ENCODE measurements at regions of chr1 and their contacts with region 1.

Region 1: GRCh38 chr1:31789259-31790065 is 25.3 kb upstream of the ADGRB2 start:
- DNase-seq: peak; percentile 97
- ATAC-seq: peak; percentile 82
- H3K4me3 Mint-ChIP-seq: peak overlapping the region; percentile 77
- H3K27ac Mint-ChIP-seq: no peak overlapping the region
- H3K4me1 Mint-ChIP-seq: peaks cover 12% of the 10 kb centered on the region
- H3K27me3 Mint-ChIP-seq: no peaks in the 10 kb centered on the region

Region 2: GRCh38 chr1:31637915-31638673 is 151.4 kb before region 1 on chr1:
- CTCF ChIA-PET with region 1: interaction called, 20 read pairs
- POLR2A ChIA-PET with region 1: interaction called, 3 read pairs
- DNase-seq: no peak
- ATAC-seq: no peak
- H3K4me3 Mint-ChIP-seq: no peak overlapping the region
- H3K27ac Mint-ChIP-seq: no peak overlapping the region
- H3K4me1 Mint-ChIP-seq: peaks cover 21% of the 10 kb centered on the region
- H3K27me3 Mint-ChIP-seq: no peaks in the 10 kb centered on the region

Region 3: GRCh38 chr1:31669786-31670592 is 119.5 kb before region 1 on chr1:
- CTCF ChIA-PET with region 1: interaction called, 51 read pairs
- POLR2A ChIA-PET with region 1: no interaction called
- DNase-seq: peak; percentile 36
- ATAC-seq: peak; percentile 66
- H3K4me3 Mint-ChIP-seq: peak overlapping the region; percentile 7
- H3K27ac Mint-ChIP-seq: no peak overlapping the region
- H3K4me1 Mint-ChIP-seq: peaks cover 6% of the 10 kb centered on the region
- H3K27me3 Mint-ChIP-seq: peaks cover 19% of the 10 kb centered on the region

Region 4: DNA sequence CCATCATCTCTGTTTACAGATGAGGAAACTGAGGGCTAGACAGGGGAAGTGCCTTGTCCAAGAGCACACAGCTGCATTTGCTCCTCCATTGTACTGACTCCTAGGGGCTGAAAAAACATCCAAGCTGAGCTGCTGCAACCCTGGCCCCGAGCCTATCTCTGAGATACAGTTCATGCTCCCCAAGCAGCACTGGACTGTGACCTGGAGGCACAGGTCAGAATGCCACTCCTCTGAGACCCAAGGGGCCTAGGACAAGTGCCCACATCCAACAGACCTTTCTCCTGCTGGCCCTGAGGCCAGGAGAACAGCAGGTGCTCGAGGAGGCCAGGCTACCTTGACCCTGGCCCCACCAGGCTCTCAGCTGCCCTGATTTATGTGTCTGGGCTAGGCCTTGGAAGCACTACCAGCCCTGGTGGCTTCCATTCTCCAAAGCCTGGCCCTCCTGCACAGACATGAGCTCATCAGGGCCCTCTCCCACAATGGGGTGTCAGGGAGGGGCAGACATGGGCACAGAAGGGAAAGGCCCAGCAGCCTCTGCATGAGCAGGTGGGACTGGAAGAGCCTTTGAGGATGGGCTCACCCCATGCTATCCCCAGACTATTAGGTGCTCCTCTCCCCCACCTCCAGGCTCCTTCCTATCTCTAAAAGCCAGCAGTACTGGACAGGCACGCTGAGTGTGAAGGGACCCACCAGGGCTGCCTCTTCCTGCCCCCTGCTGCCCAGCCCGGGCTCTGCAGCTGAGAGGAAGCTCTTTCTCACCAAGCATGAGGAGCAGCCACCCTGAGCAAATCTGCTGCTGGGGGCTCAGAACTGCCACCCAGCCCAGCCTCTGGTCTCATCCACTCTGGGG is 44.1 kb before region 1 on chr1:
- CTCF ChIA-PET with region 1: interaction called, 24 read pairs
- POLR2A ChIA-PET with region 1: interaction called, 5 read pairs
- DNase-seq: peak; percentile 80
- ATAC-seq: peak; percentile 89
- H3K4me3 Mint-ChIP-seq: no peak overlapping the region
- H3K27ac Mint-ChIP-seq: no peak overlapping the region
- H3K4me1 Mint-ChIP-seq: peaks cover 32% of the 10 kb centered on the region
- H3K27me3 Mint-ChIP-seq: no peaks in the 10 kb centered on the region

Region 5: DNA sequence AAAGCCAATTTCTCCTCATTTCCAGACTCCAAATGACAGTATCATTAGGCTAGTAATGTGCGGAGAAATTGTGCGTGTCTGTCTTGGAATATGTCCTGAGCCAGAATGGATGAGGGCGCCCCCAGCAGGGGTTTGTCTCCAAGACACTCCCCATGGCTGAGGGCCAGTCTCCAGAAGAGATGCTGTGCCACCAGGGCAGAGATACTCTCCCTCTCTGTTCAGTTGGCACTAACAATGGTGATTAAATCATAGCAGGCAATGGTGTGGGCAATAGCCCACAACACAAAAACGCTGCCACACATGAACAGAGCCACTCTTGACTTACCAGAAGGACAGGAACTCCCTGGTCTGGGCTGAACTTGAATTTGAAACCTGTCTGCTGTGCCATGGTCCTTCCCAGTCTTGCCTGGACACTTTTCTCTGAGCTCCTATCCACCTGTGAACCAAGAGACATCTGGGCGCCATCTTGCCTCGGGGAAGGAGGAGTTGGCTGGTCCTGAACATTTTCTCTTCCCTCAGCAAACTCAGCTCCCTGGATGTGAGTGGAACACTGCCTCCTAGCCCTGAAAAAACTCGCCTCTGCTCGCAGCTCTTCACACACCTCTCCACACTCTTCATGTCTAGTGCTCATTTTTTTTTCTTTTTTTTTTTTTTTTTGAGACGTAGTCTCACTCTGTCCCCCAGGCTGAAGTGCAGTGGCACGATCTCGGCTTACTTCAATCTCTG is 10.5 kb before region 1 on chr1:
- CTCF ChIA-PET with region 1: interaction called, 10 read pairs
- POLR2A ChIA-PET with region 1: no interaction called
- DNase-seq: no peak
- ATAC-seq: no peak
- H3K4me3 Mint-ChIP-seq: no peak overlapping the region
- H3K27ac Mint-ChIP-seq: no peak overlapping the region
- H3K4me1 Mint-ChIP-seq: no peaks in the 10 kb centered on the region
- H3K27me3 Mint-ChIP-seq: peaks cover 26% of the 10 kb centered on the region

Region 6: DNA sequence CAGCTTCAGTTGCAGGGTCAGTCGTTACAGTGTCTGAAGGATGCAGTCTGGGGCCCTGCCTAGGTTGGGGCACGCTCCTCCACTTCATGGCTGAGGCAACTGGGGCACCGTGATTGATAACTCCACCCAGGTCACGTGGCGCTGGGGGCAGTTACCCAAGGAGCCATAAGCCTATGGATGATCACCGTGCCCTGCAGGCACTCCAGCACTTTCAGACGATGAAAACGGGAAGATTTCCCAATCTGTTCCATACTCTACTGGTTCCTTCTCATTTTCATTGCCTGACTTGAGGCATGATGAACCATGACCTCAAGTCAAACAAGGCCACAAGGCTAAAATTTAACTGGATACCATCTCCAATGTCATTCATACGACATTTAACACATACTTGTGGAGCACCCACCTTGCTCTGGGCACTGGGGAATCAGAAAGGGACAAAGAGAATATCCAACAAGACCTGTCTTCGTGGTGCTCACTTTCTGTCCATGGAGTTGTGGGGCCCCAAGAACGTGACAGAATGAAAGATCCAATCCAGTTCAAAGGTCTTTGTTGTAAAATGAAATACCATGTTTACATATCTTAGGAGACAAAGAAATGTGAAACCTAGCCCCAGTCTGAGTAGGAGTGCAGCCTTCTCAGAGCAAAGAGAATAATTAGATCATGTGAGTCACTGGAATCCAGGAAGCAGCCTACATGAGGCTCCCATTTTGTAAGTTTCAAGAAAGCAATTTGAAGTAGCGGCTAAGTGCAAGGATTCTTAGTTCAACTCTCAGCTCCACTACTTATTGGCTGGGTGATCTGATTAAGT is 65.8 kb after region 1 on chr1:
- CTCF ChIA-PET with region 1: no interaction called
- POLR2A ChIA-PET with region 1: no interaction called
- DNase-seq: no peak
- ATAC-seq: no peak
- H3K4me3 Mint-ChIP-seq: no peak overlapping the region
- H3K27ac Mint-ChIP-seq: no peak overlapping the region
- H3K4me1 Mint-ChIP-seq: peaks cover 6% of the 10 kb centered on the region
- H3K27me3 Mint-ChIP-seq: no peaks in the 10 kb centered on the region

Region 7: GRCh38 chr1:31961536-31961935 is 172.1 kb after region 1 on chr1:
- CTCF ChIA-PET with region 1: interaction called, 20 read pairs
- POLR2A ChIA-PET with region 1: no interaction called
- DNase-seq: no peak
- ATAC-seq: no peak
- H3K4me3 Mint-ChIP-seq: peak overlapping the region; percentile 29
- H3K27ac Mint-ChIP-seq: peak overlapping the region; percentile 71
- H3K4me1 Mint-ChIP-seq: peaks cover 75% of the 10 kb centered on the region
- H3K27me3 Mint-ChIP-seq: no peaks in the 10 kb centered on the region

Measured in activated CD8-positive, alpha-beta T cell treated with anti-CD3 and anti-CD28 coated beads, Interleukin-2, amount 10 ng/mL, durations not matched to agents 7 days and 5 days (primary cell).